ENCODE measurements at regions of chr18 and their contacts with region 1.

Region 1: DNA sequence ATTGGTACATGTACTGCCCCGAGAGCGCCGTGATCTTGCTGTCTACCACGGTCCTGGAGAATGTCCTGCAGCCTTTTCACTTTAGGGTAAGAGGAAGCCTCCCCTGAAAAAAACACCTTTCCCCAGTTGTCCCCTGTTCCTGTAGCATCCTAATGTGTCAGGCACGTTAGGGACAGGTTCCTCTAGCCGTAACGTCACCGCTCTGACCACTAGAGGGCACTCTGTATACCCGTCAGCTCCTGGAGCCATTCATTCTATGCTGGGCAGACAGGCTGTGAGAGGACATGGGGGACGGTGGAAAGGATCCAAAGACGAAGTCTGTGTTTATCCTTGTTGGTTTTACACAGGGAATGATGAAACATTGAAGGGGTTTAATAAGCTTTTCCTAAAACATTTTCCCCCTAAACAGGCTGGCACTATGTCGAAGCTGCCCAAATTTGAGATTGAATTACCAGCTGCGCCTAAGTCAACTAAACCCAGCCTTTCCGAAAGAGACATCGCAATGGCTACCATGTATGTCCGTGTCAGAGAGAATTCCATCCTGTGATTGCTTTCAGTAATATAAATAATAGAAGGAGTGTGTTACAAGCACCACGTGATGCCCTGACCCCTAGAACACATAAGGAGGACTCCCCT is 12.7 kb downstream of the RMC1 start:
- DNase-seq: peak; percentile 71 to 75 (median 75)
- H3K4me3 ChIP-seq: no peak overlapping the region
- H3K4me3 Mint-ChIP-seq: no peak overlapping the region
- H3K27ac ChIP-seq: no peak overlapping the region
- H3K27ac Mint-ChIP-seq: peak overlapping the region; percentile 39 to 91 (median 82)
- H3K4me1 ChIP-seq: peaks cover 13% of the 10 kb centered on the region
- H3K4me1 Mint-ChIP-seq: peaks cover 9 to 30% (median 20%) of the 10 kb centered on the region in 4 donors
- H3K27me3 ChIP-seq: no peaks in the 10 kb centered on the region
- H3K27me3 Mint-ChIP-seq: no peaks in the 10 kb centered on the region

Region 2: GRCh38 chr18:22542401-22542835 is 973.6 kb before region 1 on chr18:
- CTCF ChIA-PET with region 1: no interaction called
- POLR2A ChIA-PET with region 1: no interaction called
- intact Hi-C with region 1: no loop called
- DNase-seq: no peak
- H3K4me3 ChIP-seq: no peak overlapping the region
- H3K4me3 Mint-ChIP-seq: no peak overlapping the region
- H3K27ac ChIP-seq: no peak overlapping the region
- H3K27ac Mint-ChIP-seq: no peak overlapping the region
- H3K4me1 ChIP-seq: no peaks in the 10 kb centered on the region
- H3K4me1 Mint-ChIP-seq: no peaks in the 10 kb centered on the region
- H3K27me3 ChIP-seq: no peaks in the 10 kb centered on the region
- H3K27me3 Mint-ChIP-seq: no peaks in the 10 kb centered on the region

Region 3: GRCh38 chr18:23458830-23459529 is 57.0 kb before region 1 on chr18:
- CTCF ChIA-PET with region 1: no interaction called
- POLR2A ChIA-PET with region 1: no interaction called
- intact Hi-C with region 1: no loop called
- DNase-seq: no peak
- H3K4me3 ChIP-seq: peak overlapping the region in 1 of 2 donors; percentile 1
- H3K4me3 Mint-ChIP-seq: peak overlapping the region in 5 of 8 donors; percentile 37 to 78 (median 58)
- H3K27ac ChIP-seq: no peak overlapping the region
- H3K27ac Mint-ChIP-seq: peak overlapping the region in 5 of 7 donors; percentile 8 to 91 (median 55)
- H3K4me1 ChIP-seq: peaks cover 68% of the 10 kb centered on the region
- H3K4me1 Mint-ChIP-seq: peaks cover 44 to 79% (median 58%) of the 10 kb centered on the region in 4 donors
- H3K27me3 ChIP-seq: no peaks in the 10 kb centered on the region
- H3K27me3 Mint-ChIP-seq: no peaks in the 10 kb centered on the region

Region 4: DNA sequence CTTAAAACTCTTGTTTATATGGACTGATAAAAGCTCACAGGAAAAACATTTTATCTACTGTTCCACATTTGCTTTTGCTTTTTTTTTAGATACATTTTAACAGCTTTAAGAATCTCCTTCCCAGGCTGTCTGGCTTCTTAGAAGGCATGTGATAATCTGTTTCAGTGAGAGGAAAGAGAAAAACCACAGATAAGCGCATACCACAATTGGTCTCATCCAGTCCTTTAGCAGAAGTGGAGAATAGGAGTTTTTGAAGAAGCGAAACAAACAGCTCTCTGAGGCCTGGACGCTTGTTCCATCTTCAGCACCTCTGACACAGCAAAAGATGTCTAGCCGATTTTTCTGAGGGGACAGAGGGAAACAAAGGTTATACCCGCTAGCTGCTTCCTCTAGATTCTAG is 24.8 kb after region 1 on chr18:
- CTCF ChIA-PET with region 1: interaction called, 27 read pairs
- POLR2A ChIA-PET with region 1: interaction called, 5 read pairs
- intact Hi-C with region 1: no loop called
- DNase-seq: peak in 4 of 5 donors; percentile 32 to 50 (median 44)
- H3K4me3 ChIP-seq: no peak overlapping the region
- H3K4me3 Mint-ChIP-seq: peak overlapping the region; percentile 21 to 86 (median 72)
- H3K27ac ChIP-seq: peak overlapping the region; percentile 45
- H3K27ac Mint-ChIP-seq: peak overlapping the region; percentile 71 to 96 (median 90)
- H3K4me1 ChIP-seq: peaks cover 36% of the 10 kb centered on the region
- H3K4me1 Mint-ChIP-seq: peaks cover 29 to 43% (median 36%) of the 10 kb centered on the region in 4 donors
- H3K27me3 ChIP-seq: no peaks in the 10 kb centered on the region
- H3K27me3 Mint-ChIP-seq: no peaks in the 10 kb centered on the region

Region 5: DNA sequence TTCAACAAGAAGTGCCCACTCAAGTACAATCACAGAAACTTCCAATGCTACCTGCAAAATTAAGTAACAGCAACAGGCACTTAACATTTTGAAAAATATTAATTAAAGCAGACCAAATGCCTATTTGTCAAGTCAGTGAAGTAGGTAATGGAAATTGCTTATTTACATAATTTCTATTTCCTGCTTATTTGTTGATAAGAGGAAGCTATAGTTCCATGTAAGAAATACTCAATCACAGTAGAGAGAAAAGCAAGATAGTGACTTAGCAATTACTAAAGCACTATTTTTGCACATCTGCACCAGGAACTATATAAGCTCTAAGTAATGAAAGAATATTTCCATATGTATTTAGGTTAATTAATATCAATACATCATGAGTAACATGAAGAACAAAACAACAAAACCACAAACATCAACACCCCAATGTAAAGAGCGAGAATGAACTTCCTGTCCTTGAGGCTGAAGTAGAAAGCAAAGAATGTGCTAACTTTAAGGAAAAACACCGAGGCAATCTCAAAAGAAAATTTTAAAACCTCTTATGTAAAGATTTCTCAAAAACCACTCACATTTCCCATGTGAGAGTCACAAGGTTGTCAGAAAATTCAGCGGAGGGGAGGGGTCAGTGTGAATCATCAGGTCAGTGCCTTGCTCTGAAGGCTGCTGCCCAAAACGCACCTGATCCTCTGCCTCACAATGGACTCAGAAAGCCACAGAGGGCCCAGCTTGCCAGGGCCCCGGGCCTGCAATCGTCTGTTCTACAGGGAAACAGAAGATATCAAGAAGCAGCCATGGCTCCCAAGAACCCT is 57.8 kb after region 1 on chr18:
- CTCF ChIA-PET with region 1: interaction called, 41 read pairs
- POLR2A ChIA-PET with region 1: interaction called, 6 read pairs
- intact Hi-C with region 1: no loop called
- DNase-seq: peak; percentile 23 to 65 (median 47)
- H3K4me3 ChIP-seq: peak overlapping the region in 1 of 2 donors; percentile 4
- H3K4me3 Mint-ChIP-seq: peak overlapping the region; percentile 37 to 80 (median 70)
- H3K27ac ChIP-seq: peak overlapping the region; percentile 34
- H3K27ac Mint-ChIP-seq: peak overlapping the region; percentile 67 to 93 (median 84)
- H3K4me1 ChIP-seq: peaks cover 56% of the 10 kb centered on the region
- H3K4me1 Mint-ChIP-seq: peaks cover 36 to 66% (median 50%) of the 10 kb centered on the region in 4 donors
- H3K27me3 ChIP-seq: no peaks in the 10 kb centered on the region
- H3K27me3 Mint-ChIP-seq: no peaks in the 10 kb centered on the region

Region 6: GRCh38 chr18:23586249-23587196 is 70.5 kb after region 1 on chr18 and contains the start of gene NPC1:
- CTCF ChIA-PET with region 1: interaction called, 85 read pairs
- POLR2A ChIA-PET with region 1: interaction called, 16 read pairs
- intact Hi-C with region 1: loop called (anchors 1 kb)
- DNase-seq: peak; percentile 91 to 95 (median 94)
- H3K4me3 ChIP-seq: peak within 1 kb of the TSS; percentile 77 to 87
- H3K4me3 Mint-ChIP-seq: peak within 1 kb of the TSS; percentile 87 to 96 (median 94)
- H3K27ac ChIP-seq: peak within 1 kb of the TSS; percentile 97
- H3K27ac Mint-ChIP-seq: peak within 1 kb of the TSS; percentile 95 to 98 (median 97)
- H3K4me1 ChIP-seq: peaks cover 46% of the 10 kb centered on the region
- H3K4me1 Mint-ChIP-seq: peaks cover 25 to 47% (median 37%) of the 10 kb centered on the region in 4 donors
- H3K27me3 ChIP-seq: no peaks in the 10 kb centered on the region
- H3K27me3 Mint-ChIP-seq: peaks cover 0 to 4% of the 10 kb centered on the region in 2 donors
- total RNA-seq, gene NPC1: 62.9 to 64.5 TPM

Region 7: GRCh38 chr18:23650968-23651927 is 135.2 kb after region 1 on chr18:
- CTCF ChIA-PET with region 1: no interaction called
- POLR2A ChIA-PET with region 1: no interaction called
- intact Hi-C with region 1: no loop called
- DNase-seq: no peak
- H3K4me3 ChIP-seq: no peak overlapping the region
- H3K4me3 Mint-ChIP-seq: no peak overlapping the region
- H3K27ac ChIP-seq: no peak overlapping the region
- H3K27ac Mint-ChIP-seq: no peak overlapping the region
- H3K4me1 ChIP-seq: no peaks in the 10 kb centered on the region
- H3K4me1 Mint-ChIP-seq: peaks cover 0 to 5% (median 0%) of the 10 kb centered on the region in 4 donors
- H3K27me3 ChIP-seq: no peaks in the 10 kb centered on the region
- H3K27me3 Mint-ChIP-seq: no peaks in the 10 kb centered on the region

Region 8: GRCh38 chr18:23812546-23813440 is 296.8 kb after region 1 on chr18:
- CTCF ChIA-PET with region 1: no interaction called
- POLR2A ChIA-PET with region 1: no interaction called
- intact Hi-C with region 1: loop called (anchors 5 kb)
- DNase-seq: peak in 4 of 5 donors; percentile 28 to 39 (median 32)
- H3K4me3 ChIP-seq: no peak overlapping the region
- H3K4me3 Mint-ChIP-seq: no peak overlapping the region
- H3K27ac ChIP-seq: no peak overlapping the region
- H3K27ac Mint-ChIP-seq: no peak overlapping the region
- H3K4me1 ChIP-seq: peaks cover 13% of the 10 kb centered on the region
- H3K4me1 Mint-ChIP-seq: peaks cover 2 to 16% (median 12%) of the 10 kb centered on the region in 4 donors
- H3K27me3 ChIP-seq: no peaks in the 10 kb centered on the region
- H3K27me3 Mint-ChIP-seq: no peaks in the 10 kb centered on the region